Caco-2 (cell line): ENCODE measurements at regions of chr7 and their contacts with region 1.

Region 1: DNA sequence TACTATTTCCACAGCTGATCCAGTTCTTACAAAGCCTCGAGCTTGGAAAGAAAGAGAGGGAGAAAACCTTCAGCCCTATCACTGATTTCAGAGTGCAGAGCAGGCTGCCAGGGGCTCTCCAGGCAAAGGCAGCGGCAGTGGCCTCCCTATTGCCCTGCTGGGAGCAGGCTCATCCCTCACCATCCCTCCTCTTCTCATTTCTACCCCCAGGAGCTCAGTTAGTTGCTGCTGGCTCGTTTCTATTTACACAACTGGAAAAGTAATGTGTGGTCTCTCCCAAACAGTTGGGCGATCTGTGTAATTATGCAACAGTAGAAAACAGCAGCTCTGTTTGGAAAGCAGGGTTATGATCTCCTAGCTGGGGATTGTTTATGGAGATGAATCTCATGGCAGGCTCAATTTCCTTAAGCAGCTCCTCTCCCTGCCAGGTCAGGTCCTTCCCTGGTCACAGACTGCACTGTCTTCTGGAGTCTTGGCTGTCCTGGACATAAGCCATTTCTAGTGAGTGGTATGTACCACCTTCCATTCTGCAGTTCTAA is 28.7 kb upstream of the TNS3 start:
- DNase-seq: no peak
- H3K4me3 ChIP-seq: no peak overlapping the region
- H3K4me3 Mint-ChIP-seq: no peak overlapping the region
- H3K27ac Mint-ChIP-seq: peak overlapping the region; percentile 72
- H3K4me1 ChIP-seq: peaks cover 47% of the 10 kb centered on the region
- H3K4me1 Mint-ChIP-seq: peaks cover 33% of the 10 kb centered on the region
- H3K27me3 ChIP-seq: no peaks in the 10 kb centered on the region
- H3K27me3 Mint-ChIP-seq: no peaks in the 10 kb centered on the region
- CTCF ChIP-seq: no peak

Region 2: DNA sequence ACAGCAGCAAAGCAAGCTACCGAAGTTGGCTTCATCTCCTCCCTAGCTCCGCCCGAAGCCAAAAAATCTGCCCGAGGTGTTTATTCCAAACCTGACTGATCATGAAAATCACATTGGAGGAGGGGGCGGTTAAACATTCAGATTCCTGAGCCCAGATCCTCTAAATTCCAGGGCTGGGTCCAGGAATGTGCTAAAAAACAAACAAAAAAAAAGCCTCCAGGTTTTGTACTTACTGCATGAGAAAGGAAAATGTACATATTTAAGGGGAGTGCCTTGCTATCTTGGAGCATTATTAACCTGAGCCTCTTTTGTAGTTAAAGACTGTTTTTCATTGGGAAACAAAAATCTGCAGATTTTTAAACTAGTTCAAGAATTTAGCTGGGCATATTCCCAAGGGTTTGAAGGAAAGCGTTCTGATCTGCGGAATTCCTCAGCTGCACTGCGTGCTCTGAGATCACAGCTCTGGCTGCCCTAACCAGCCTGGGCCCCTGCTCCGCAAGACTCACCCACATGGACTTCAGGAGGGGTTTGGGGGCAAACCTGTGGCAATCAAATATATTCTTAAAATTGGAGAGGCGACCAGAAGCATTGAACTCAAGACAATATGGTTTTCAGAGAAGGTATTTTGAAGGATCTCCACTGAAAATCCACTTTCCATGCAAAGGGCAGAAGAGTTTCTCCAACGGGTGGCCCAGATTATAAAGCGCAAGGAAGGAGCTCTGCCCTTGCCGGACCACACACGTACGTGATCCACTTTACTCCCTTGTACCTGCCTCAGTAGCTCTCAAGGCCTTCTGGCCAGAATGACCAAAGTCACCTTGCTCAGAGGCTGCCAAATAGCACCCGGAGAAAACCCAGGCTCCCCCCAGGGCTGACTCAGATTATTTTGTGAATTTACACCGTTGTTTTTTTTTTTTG is 18.7 kb before region 1 on chr7:
- CTCF ChIA-PET with region 1: no interaction called
- POLR2A ChIA-PET with region 1: interaction called, 9 read pairs
- intact Hi-C with region 1: loop called (anchors 1 kb)
- DNase-seq: peak; percentile 87 to 92
- H3K4me3 ChIP-seq: 0 out of 2 replicates have a peak overlapping the region, but pooled peaks have one; percentile 9
- H3K4me3 Mint-ChIP-seq: peak overlapping the region; percentile 65
- H3K27ac Mint-ChIP-seq: peak overlapping the region; percentile 86
- H3K4me1 ChIP-seq: peaks cover 64% of the 10 kb centered on the region
- H3K4me1 Mint-ChIP-seq: peaks cover 41% of the 10 kb centered on the region
- H3K27me3 ChIP-seq: no peaks in the 10 kb centered on the region
- H3K27me3 Mint-ChIP-seq: no peaks in the 10 kb centered on the region
- CTCF ChIP-seq: no peak

Region 3: GRCh38 chr7:47622946-47623640 is 12.5 kb after region 1 on chr7:
- CTCF ChIA-PET with region 1: no interaction called
- POLR2A ChIA-PET with region 1: interaction called, 4 read pairs
- intact Hi-C with region 1: loop called (anchors 1 kb)
- DNase-seq: peak; percentile 56 to 79
- H3K4me3 ChIP-seq: no peak overlapping the region
- H3K4me3 Mint-ChIP-seq: peak overlapping the region; percentile 16
- H3K27ac Mint-ChIP-seq: peak overlapping the region; percentile 77
- H3K4me1 ChIP-seq: peaks cover 57% of the 10 kb centered on the region
- H3K4me1 Mint-ChIP-seq: peaks cover 37% of the 10 kb centered on the region
- H3K27me3 ChIP-seq: no peaks in the 10 kb centered on the region
- H3K27me3 Mint-ChIP-seq: no peaks in the 10 kb centered on the region
- CTCF ChIP-seq: no peak

Region 4: GRCh38 chr7:47661051-47661714 is 50.6 kb after region 1 on chr7:
- CTCF ChIA-PET with region 1: no interaction called
- POLR2A ChIA-PET with region 1: interaction called, 5 read pairs
- intact Hi-C with region 1: loop called (anchors 1 kb)
- DNase-seq: no peak
- H3K4me3 ChIP-seq: no peak overlapping the region
- H3K4me3 Mint-ChIP-seq: no peak overlapping the region
- H3K27ac Mint-ChIP-seq: peak overlapping the region; percentile 55
- H3K4me1 ChIP-seq: peaks cover 52% of the 10 kb centered on the region
- H3K4me1 Mint-ChIP-seq: peaks cover 30% of the 10 kb centered on the region
- H3K27me3 ChIP-seq: no peaks in the 10 kb centered on the region
- H3K27me3 Mint-ChIP-seq: no peaks in the 10 kb centered on the region
- CTCF ChIP-seq: no peak

Region 5: GRCh38 chr7:47690902-47691558 is 80.5 kb after region 1 on chr7:
- CTCF ChIA-PET with region 1: no interaction called
- POLR2A ChIA-PET with region 1: no interaction called
- intact Hi-C with region 1: no loop called
- DNase-seq: no peak
- H3K4me3 ChIP-seq: no peak overlapping the region
- H3K4me3 Mint-ChIP-seq: no peak overlapping the region
- H3K27ac Mint-ChIP-seq: no peak overlapping the region
- H3K4me1 ChIP-seq: peaks cover 16% of the 10 kb centered on the region
- H3K4me1 Mint-ChIP-seq: peaks cover 18% of the 10 kb centered on the region
- H3K27me3 ChIP-seq: no peaks in the 10 kb centered on the region
- H3K27me3 Mint-ChIP-seq: no peaks in the 10 kb centered on the region
- CTCF ChIP-seq: no peak

Region 6: DNA sequence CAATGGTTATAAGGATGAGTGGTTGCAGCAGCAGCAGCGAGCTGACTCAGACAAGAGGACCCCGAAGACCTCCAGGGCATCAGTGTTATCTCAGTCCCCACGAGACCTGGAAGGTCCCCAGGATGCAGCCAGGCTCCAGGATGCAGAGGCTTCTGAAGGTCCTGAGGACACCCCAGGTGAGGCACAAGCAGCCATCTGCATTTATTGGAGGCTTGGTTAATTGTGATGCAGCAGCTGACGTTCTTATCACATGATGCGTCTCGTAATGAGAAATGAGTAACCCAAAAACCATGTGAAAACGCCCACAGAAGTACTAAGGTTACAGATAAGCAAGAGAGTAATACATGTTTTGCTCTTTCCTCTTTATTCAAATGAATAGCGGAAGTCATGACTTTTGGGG is 442.2 kb after region 1 on chr7:
- CTCF ChIA-PET with region 1: no interaction called
- POLR2A ChIA-PET with region 1: no interaction called
- intact Hi-C with region 1: no loop called
- DNase-seq: no peak
- H3K4me3 ChIP-seq: no peak overlapping the region
- H3K4me3 Mint-ChIP-seq: no peak overlapping the region
- H3K27ac Mint-ChIP-seq: no peak overlapping the region
- H3K4me1 ChIP-seq: peaks cover 11% of the 10 kb centered on the region
- H3K4me1 Mint-ChIP-seq: no peaks in the 10 kb centered on the region
- H3K27me3 ChIP-seq: no peaks in the 10 kb centered on the region
- H3K27me3 Mint-ChIP-seq: peaks cover 3% of the 10 kb centered on the region
- CTCF ChIP-seq: no peak